MCF 10A (cell line): ENCODE measurements at regions of chr3 and their contacts with region 1.

Region 1: GRCh38 chr3:39541917-39542329 is 74.4 kb downstream of the MOBP start:
- DNase-seq: peak; percentile 49
- H3K4me3 Mint-ChIP-seq: no peak overlapping the region
- H3K27ac Mint-ChIP-seq: no peak overlapping the region
- H3K4me1 Mint-ChIP-seq: no peaks in the 10 kb centered on the region
- H3K27me3 Mint-ChIP-seq: no peaks in the 10 kb centered on the region
- CTCF ChIP-seq: peak; percentile 32

Region 2: DNA sequence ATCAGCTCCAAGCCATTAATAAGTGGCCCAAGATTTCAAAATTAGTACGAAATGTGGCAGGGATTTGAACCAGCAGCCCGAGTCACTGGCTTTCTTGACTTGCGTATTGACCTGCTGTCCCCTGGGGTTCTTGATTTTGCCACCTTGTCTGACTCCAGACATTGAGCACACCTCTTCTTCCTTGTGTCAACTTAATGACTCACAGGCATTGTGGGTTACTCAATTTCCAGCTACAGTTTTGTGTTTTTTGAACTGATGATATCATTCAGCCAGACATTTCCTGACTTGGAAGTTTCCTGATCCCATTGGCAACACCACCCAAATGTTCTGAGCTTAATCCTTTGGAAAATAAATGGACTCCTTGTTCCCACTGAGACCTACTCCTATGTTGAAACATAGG is 10.3 kb before region 1 on chr3:
- CTCF ChIA-PET with region 1: interaction called, 14 read pairs
- POLR2A ChIA-PET with region 1: interaction called, 9 read pairs
- intact Hi-C with region 1: no loop called
- DNase-seq: peak; percentile 96
- H3K4me3 Mint-ChIP-seq: no peak overlapping the region
- H3K27ac Mint-ChIP-seq: peak overlapping the region; percentile 34
- H3K4me1 Mint-ChIP-seq: peaks cover 22% of the 10 kb centered on the region
- H3K27me3 Mint-ChIP-seq: no peaks in the 10 kb centered on the region
- CTCF ChIP-seq: no peak

Region 3: DNA sequence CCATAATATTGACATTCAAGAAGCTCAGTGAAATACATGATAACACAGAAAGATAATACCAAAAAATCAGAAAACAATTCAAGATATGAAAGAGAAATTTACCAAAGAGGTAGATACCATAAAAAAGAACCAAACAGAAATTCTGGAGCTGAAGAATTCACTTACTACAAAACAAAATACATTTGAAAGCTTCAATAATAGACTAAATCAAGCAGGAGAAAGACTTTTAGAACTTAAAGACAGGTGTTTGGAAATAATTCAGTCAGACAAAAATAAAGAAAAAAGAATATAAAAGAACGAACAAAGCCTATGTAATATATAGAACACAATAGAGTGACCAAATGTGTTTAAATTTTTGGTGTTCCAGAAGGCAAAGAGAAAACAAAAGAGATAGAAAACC is 84.3 kb after region 1 on chr3:
- CTCF ChIA-PET with region 1: no interaction called
- POLR2A ChIA-PET with region 1: no interaction called
- intact Hi-C with region 1: no loop called
- DNase-seq: no peak
- H3K4me3 Mint-ChIP-seq: no peak overlapping the region
- H3K27ac Mint-ChIP-seq: no peak overlapping the region
- H3K4me1 Mint-ChIP-seq: no peaks in the 10 kb centered on the region
- H3K27me3 Mint-ChIP-seq: no peaks in the 10 kb centered on the region
- CTCF ChIP-seq: no peak

Region 4: GRCh38 chr3:39707314-39707909 is 165.5 kb after region 1 on chr3:
- CTCF ChIA-PET with region 1: interaction called, 3 read pairs
- POLR2A ChIA-PET with region 1: no interaction called
- intact Hi-C with region 1: loop called (anchors 5 kb)
- DNase-seq: peak; percentile 43
- H3K4me3 Mint-ChIP-seq: no peak overlapping the region
- H3K27ac Mint-ChIP-seq: no peak overlapping the region
- H3K4me1 Mint-ChIP-seq: peaks cover 9% of the 10 kb centered on the region
- H3K27me3 Mint-ChIP-seq: no peaks in the 10 kb centered on the region
- CTCF ChIP-seq: peak; percentile 32

Region 5: DNA sequence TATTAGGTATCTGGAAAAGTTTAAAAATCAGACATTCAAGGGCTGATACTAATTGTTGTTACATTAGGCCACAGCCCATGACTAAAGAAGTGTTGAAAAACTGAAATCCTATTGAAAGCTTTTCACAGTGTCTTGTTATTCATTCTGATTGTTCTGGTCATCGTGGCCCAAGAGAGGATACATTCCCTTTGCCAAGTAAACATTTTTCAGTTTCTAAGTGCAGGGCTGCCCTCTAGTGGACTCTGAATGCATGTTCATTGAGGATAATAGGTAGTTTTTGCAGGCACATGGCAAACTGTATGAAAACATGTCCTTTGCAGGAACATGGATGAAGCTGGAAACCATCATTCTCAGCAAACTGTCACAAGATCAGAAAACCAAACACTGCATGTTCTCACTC is 448.6 kb after region 1 on chr3:
- CTCF ChIA-PET with region 1: interaction called, 5 read pairs
- POLR2A ChIA-PET with region 1: no interaction called
- intact Hi-C with region 1: loop called (anchors 1 kb)
- DNase-seq: peak; percentile 80
- H3K4me3 Mint-ChIP-seq: no peak overlapping the region
- H3K27ac Mint-ChIP-seq: no peak overlapping the region
- H3K4me1 Mint-ChIP-seq: no peaks in the 10 kb centered on the region
- H3K27me3 Mint-ChIP-seq: no peaks in the 10 kb centered on the region
- CTCF ChIP-seq: peak; percentile 68

Region 6: DNA sequence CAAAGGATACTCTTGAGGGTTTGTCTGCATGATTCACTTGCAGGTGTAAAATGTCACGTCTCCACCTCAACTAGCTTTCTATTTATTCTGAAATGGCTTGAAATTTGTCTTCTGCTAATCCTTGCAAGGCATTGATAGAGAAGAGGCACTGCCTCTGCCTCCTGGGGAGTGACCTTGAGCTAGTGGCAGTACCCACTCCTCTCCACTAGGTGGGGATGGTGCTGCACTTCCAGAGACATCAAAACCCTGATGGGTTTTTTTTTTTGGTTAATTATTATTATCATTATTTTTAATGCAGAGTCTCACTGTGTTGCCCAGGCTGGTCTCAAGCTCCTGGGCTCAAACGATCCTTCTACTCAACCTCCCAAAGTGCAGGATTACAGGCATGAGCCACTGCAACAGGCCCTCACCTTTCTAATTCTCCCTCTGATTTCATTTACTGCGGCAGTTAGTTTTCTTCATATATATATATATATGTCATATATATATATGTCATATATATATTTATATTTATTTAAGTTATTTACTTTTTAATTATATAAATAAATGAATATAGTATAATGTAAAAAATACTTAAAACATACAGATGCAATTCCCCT is 650.0 kb after region 1 on chr3:
- CTCF ChIA-PET with region 1: interaction called, 11 read pairs
- POLR2A ChIA-PET with region 1: no interaction called
- intact Hi-C with region 1: no loop called
- DNase-seq: peak; percentile 65
- H3K4me3 Mint-ChIP-seq: no peak overlapping the region
- H3K27ac Mint-ChIP-seq: no peak overlapping the region
- H3K4me1 Mint-ChIP-seq: peaks cover 4% of the 10 kb centered on the region
- H3K27me3 Mint-ChIP-seq: no peaks in the 10 kb centered on the region
- CTCF ChIP-seq: peak; percentile 96